B cell (primary cell): ENCODE measurements at regions of chr6 and their contacts with region 1.

Region 1: GRCh38 chr6:26122793-26123674 is 35.8 kb downstream of the HFE start:
- DNase-seq: peak; percentile 97
- ATAC-seq: peak; percentile 59
- H3K4me3 ChIP-seq: peak overlapping the region; percentile 87 to 100 (median 96)
- H3K4me3 Mint-ChIP-seq: peak overlapping the region; percentile 93
- H3K27ac ChIP-seq: peak overlapping the region; percentile 87 to 88
- H3K27ac Mint-ChIP-seq: peak overlapping the region; percentile 97
- H3K4me1 ChIP-seq: peaks cover 19 to 23% of the 10 kb centered on the region in 2 donors
- H3K4me1 Mint-ChIP-seq: peaks cover 26% of the 10 kb centered on the region
- H3K27me3 ChIP-seq: no peaks in the 10 kb centered on the region
- H3K27me3 Mint-ChIP-seq: no peaks in the 10 kb centered on the region
- CTCF ChIP-seq: no peak

Region 2: DNA sequence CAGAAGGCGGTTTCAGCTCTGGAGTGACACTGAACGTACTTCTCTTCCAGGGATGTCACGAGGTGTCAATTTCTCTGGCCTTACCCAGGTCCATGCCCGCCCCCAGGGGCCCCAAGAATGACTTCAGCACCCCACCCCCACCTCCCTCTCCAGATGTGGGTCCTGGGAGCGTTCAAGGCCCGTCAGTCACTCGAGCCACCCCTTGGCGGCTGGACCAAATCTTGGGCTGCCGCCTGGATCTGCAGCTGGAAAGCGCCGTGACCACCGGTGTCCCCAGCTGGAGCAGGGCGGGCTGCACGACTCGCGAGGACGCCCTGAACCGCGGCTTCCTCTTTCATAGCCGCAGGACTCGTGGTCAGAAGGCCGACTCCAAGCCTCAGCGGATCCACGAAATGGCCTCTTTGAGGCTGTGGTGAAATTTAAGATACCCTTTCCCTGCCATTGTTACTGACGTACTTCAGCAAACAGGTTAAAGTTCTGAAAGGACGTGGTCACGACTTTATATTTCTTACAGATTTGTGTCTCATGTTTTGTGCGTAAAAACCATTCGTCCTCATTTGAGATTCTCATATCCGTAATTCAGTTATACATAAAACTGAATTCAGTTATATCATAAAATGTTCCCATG is 131.1 kb before region 1 on chr6:
- CTCF ChIA-PET with region 1: no interaction called
- POLR2A ChIA-PET with region 1: no interaction called
- intact Hi-C with region 1: no loop called
- DNase-seq: peak; percentile 88
- ATAC-seq: peak; percentile 42
- H3K4me3 ChIP-seq: peak overlapping the region; percentile 49 to 80 (median 72)
- H3K4me3 Mint-ChIP-seq: peak overlapping the region; percentile 99
- H3K27ac ChIP-seq: peak overlapping the region; percentile 84 to 94
- H3K27ac Mint-ChIP-seq: peak overlapping the region; percentile 100
- H3K4me1 ChIP-seq: peaks cover 11 to 20% of the 10 kb centered on the region in 2 donors
- H3K4me1 Mint-ChIP-seq: peaks cover 49% of the 10 kb centered on the region
- H3K27me3 ChIP-seq: no peaks in the 10 kb centered on the region
- H3K27me3 Mint-ChIP-seq: no peaks in the 10 kb centered on the region
- CTCF ChIP-seq: no peak

Region 3: DNA sequence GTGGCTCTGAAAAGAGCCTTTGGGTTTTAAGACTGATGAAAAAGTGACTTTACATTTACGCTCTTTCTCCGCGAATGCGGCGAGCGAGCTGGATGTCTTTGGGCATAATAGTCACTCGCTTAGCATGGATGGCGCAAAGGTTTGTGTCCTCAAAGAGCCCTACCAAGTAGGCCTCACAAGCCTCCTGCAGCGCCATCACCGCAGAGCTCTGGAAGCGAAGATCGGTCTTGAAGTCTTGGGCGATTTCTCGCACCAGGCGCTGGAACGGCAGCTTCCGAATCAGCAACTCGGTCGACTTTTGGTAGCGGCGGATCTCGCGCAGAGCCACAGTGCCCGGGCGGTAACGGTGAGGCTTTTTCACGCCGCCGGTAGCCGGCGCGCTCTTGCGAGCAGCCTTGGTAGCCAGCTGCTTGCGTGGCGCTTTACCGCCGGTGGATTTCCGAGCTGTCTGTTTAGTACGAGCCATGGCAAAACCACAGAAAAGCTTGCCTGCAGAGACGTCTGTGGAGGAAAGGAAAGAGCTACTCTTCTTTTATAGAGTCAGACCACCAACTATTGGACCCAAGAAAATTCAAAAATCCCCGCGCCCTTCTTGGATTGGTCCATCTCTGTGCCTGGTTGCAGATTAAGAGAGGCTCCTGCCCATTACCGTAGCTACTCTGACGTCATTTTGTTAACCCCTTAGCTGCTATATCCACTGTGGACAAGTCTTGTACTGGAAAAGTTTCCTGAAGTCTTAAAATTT is 91.3 kb before region 1 on chr6:
- CTCF ChIA-PET with region 1: interaction called, 19 read pairs
- POLR2A ChIA-PET with region 1: interaction called, 39 read pairs
- intact Hi-C with region 1: loop called (anchors 1 kb)
- DNase-seq: peak; percentile 90
- ATAC-seq: peak; percentile 63
- H3K4me3 ChIP-seq: peak overlapping the region; percentile 67 to 85 (median 69)
- H3K4me3 Mint-ChIP-seq: peak overlapping the region; percentile 96
- H3K27ac ChIP-seq: peak overlapping the region; percentile 76 to 78
- H3K27ac Mint-ChIP-seq: peak overlapping the region; percentile 87
- H3K4me1 ChIP-seq: peaks cover 26 to 36% of the 10 kb centered on the region in 2 donors
- H3K4me1 Mint-ChIP-seq: peaks cover 46% of the 10 kb centered on the region
- H3K27me3 ChIP-seq: no peaks in the 10 kb centered on the region
- H3K27me3 Mint-ChIP-seq: no peaks in the 10 kb centered on the region
- CTCF ChIP-seq: no peak

Region 4: DNA sequence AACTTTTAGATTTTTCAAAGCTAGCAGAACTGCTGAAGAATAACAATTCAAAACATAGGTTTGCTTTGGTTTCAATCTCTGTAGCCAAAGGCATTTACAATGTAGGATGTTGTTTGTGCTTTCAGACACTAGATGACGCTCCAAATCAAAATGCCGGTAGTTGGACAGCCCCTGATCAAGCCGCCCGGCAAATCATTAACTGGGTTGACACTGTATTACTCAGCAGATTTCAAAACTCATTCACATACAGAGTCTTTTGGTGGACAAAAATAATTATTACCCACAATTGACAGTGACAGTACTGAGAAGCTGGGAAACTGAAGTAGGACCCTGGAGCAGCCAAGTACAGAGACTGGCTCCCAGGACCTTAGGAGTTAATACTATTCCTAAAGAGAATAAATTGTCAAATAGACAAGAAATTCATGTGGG is 57.1 kb before region 1 on chr6:
- CTCF ChIA-PET with region 1: interaction called, 8 read pairs
- POLR2A ChIA-PET with region 1: interaction called, 3 read pairs
- intact Hi-C with region 1: loop called (anchors 2 kb)
- DNase-seq: peak; percentile 83
- ATAC-seq: peak; percentile 88
- H3K4me3 ChIP-seq: no peak overlapping the region
- H3K4me3 Mint-ChIP-seq: no peak overlapping the region
- H3K27ac ChIP-seq: no peak overlapping the region
- H3K27ac Mint-ChIP-seq: no peak overlapping the region
- H3K4me1 ChIP-seq: peaks cover 0 to 4% of the 10 kb centered on the region in 2 donors
- H3K4me1 Mint-ChIP-seq: peaks cover 7% of the 10 kb centered on the region
- H3K27me3 ChIP-seq: peaks cover 0 to 2% (median 0%) of the 10 kb centered on the region in 4 experiments
- H3K27me3 Mint-ChIP-seq: no peaks in the 10 kb centered on the region
- CTCF ChIP-seq: peak; percentile 90

Region 5: DNA sequence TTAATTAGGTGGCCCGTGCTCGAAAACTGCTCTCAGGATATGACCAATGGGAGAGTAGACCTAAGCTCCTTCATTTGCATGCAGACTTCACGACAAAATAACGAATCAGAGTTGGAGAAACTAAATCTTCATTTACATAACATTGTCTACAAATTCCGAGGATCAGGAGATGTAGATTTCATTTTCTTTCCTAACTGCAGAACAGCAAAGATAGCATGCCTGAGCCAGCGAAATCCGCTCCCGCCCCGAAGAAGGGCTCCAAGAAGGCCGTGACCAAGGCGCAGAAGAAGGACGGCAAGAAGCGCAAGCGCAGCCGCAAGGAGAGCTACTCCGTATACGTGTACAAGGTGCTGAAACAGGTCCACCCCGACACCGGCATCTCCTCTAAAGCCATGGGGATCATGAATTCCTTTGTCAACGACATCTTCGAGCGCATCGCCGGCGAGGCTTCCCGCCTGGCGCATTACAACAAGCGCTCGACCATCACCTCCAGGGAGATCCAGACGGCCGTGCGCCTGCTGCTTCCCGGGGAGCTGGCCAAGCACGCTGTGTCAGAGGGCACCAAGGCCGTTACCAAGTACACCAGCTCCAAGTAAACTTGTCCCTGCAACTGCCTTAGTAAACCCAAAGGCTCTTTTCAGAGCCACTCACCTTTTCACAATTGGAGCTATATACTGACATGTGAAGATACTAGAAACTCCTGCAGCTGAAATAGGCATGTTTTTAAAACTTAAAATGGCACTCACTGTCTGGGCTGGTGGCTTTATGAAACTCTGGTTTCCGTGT is 60.7 kb after region 1 on chr6:
- CTCF ChIA-PET with region 1: interaction called, 5 read pairs
- POLR2A ChIA-PET with region 1: interaction called, 36 read pairs
- intact Hi-C with region 1: loop called (anchors 2 kb)
- DNase-seq: peak; percentile 84
- ATAC-seq: peak; percentile 89
- H3K4me3 ChIP-seq: peak overlapping the region; percentile 51 to 73 (median 71)
- H3K4me3 Mint-ChIP-seq: peak overlapping the region; percentile 91
- H3K27ac ChIP-seq: peak overlapping the region in 1 of 2 donors; percentile 61
- H3K27ac Mint-ChIP-seq: peak overlapping the region; percentile 85
- H3K4me1 ChIP-seq: peaks cover 13 to 22% of the 10 kb centered on the region in 2 donors
- H3K4me1 Mint-ChIP-seq: peaks cover 25% of the 10 kb centered on the region
- H3K27me3 ChIP-seq: no peaks in the 10 kb centered on the region
- H3K27me3 Mint-ChIP-seq: no peaks in the 10 kb centered on the region
- CTCF ChIP-seq: no peak

Region 6: DNA sequence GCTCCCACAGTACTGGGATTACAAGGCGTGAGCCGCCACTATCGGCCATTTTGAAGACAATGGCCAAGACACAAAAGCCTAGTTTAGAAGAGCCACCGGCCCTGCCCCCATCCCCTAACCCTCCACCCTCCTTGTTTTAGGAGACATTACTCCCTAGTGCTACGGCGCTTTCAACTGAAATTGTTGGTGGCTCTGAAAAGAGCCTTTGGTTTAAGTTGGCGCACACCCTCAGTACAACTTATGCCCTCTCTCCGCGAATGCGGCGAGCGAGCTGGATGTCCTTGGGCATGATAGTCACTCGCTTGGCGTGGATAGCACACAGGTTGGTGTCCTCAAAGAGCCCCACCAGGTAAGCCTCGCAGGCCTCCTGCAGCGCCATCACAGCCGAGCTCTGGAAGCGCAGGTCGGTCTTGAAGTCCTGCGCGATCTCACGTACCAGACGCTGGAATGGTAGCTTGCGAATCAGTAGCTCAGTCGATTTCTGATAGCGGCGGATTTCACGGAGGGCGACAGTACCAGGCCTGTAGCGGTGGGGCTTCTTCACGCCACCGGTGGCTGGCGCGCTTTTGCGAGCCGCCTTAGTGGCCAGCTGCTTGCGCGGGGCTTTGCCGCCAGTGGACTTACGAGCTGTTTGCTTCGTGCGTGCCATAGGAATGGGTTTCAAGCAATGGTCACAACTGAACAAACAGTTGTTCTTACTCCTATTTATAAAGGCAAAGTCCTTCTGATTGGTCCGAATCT is 127.1 kb after region 1 on chr6:
- CTCF ChIA-PET with region 1: interaction called, 3 read pairs
- POLR2A ChIA-PET with region 1: interaction called, 18 read pairs
- intact Hi-C with region 1: no loop called
- DNase-seq: peak; percentile 88
- ATAC-seq: peak; percentile 67
- H3K4me3 ChIP-seq: peak overlapping the region; percentile 68 to 90 (median 83)
- H3K4me3 Mint-ChIP-seq: peak overlapping the region; percentile 97
- H3K27ac ChIP-seq: peak overlapping the region; percentile 73 to 74
- H3K27ac Mint-ChIP-seq: peak overlapping the region; percentile 97
- H3K4me1 ChIP-seq: peaks cover 8 to 16% of the 10 kb centered on the region in 2 donors
- H3K4me1 Mint-ChIP-seq: peaks cover 43% of the 10 kb centered on the region
- H3K27me3 ChIP-seq: no peaks in the 10 kb centered on the region
- H3K27me3 Mint-ChIP-seq: no peaks in the 10 kb centered on the region
- CTCF ChIP-seq: peak; percentile 70

Region 7: GRCh38 chr6:27838058-27838944 is 1715.3 kb after region 1 on chr6:
- CTCF ChIA-PET with region 1: no interaction called
- POLR2A ChIA-PET with region 1: interaction called, 8 read pairs
- intact Hi-C with region 1: loop called (anchors 10 kb)
- DNase-seq: peak; percentile 98
- ATAC-seq: peak; percentile 80
- H3K4me3 ChIP-seq: peak overlapping the region; percentile 82 to 99 (median 90)
- H3K4me3 Mint-ChIP-seq: no peak overlapping the region
- H3K27ac ChIP-seq: peak overlapping the region; percentile 94 to 96
- H3K27ac Mint-ChIP-seq: no peak overlapping the region
- H3K4me1 ChIP-seq: peaks cover 28 to 29% of the 10 kb centered on the region in 2 donors
- H3K4me1 Mint-ChIP-seq: peaks cover 18% of the 10 kb centered on the region
- H3K27me3 ChIP-seq: peaks cover 0 to 4% (median 0%) of the 10 kb centered on the region in 4 experiments
- H3K27me3 Mint-ChIP-seq: no peaks in the 10 kb centered on the region
- CTCF ChIP-seq: no peak